Aorta (tissue), 5 donors: ENCODE measurements at regions of chr11 and their contacts with region 1.

Region 1: DNA sequence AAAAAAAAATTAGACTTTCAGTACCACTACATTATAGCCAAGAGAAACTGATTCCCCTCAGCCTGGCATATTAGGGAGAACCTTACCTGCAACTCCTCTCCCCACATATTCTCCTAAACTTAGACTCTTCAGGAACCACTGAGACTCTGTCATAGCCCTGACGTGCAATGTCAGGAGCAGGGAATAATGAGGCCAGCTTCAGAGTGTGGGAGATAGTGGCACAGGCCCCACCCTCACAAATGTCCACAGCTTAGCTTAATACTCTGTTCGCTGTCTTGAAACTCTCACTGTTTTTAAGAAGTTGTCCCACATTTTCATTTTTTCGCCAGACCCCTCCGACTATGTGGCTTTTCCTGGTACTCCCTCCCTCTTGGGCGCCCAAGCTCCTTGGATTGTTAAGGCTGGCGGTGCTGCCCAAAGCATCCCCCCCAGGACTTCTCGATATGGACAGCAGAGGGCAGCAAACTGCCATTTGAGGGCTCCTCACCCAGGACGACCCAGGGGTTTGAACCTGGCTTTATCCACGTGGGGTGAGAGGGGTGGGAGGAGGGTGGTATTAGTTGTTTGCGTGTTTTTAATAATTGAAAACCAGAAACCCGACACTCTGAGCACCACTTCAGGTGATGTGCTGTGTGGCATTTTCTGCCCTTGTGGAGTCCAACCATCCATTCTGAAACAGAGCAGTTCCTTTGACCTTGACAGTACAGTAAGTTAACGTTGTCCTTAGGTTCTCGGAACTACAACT is 45.2 kb upstream of the RASSF10 start:
- DNase-seq: peak; percentile 63 to 86
- ATAC-seq: peak; percentile 87
- H3K4me3 ChIP-seq: no peak overlapping the region
- H3K27ac ChIP-seq: no peak overlapping the region
- H3K4me1 ChIP-seq: no peaks in the 10 kb centered on the region
- H3K27me3 ChIP-seq: no peaks in the 10 kb centered on the region

Region 2: DNA sequence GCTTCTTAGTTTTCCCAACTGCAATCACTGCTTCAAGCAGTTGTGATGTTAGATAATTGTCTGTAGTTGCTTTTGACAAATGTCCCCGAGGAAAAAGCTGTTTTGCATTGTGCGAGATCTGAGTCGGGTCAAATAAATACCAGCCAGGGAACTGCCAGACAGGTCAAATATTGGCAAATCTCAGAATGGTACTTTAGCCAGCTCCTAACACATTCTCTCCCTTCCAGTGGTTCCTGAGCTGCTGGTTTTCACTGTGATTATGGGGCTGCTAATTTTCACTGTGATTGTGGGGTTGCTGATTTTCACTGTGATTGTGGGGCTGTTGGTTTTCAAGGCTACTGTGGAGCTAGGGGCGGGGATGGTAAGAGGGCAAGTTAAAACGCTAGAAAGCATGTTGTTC is 59.5 kb after region 1 on chr11:
- intact Hi-C with region 1: no loop called
- DNase-seq: no peak
- ATAC-seq: no peak
- H3K4me3 ChIP-seq: no peak overlapping the region
- H3K27ac ChIP-seq: no peak overlapping the region
- H3K4me1 ChIP-seq: no peaks in the 10 kb centered on the region
- H3K27me3 ChIP-seq: no peaks in the 10 kb centered on the region

Region 3: DNA sequence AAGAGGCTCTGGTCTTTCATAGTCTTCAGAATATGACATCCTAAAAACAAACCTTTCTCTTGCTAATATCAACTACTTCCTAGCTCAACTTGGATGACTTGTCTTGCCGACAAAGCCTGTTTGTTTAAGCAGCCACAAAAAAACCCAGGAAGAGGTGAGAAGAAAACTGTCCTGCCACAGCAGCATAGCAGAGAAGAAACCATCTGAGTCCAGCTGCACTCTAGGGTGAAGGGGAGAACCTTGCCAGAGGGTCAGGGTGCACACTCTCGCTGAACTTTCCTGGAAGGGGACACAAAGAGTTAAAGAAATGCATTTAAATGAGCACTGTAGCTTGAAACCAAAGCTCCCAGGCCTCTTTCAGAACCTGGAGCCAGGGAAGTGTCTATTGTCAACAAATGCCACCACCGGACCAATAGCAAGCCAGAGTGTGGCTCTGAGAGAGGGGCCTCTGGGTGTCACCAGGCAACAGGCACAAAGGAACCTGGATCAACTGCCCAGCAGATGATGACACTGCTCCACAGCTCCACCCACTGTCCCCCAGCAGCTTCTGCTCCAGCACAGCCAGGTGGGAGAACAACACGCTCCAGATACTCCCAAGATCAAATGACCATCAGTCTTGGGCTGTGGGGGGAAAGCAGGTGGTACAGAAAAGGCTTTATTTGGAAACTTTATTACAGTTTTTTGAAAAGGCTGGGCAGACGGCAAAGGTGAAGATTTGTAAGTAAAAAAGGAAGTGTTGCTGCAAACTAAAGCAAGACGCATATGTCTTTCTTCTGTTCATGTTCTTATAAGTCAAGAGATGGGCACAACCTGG is 150.8 kb after region 1 on chr11:
- intact Hi-C with region 1: no loop called
- DNase-seq: no peak
- ATAC-seq: no peak
- H3K4me3 ChIP-seq: no peak overlapping the region
- H3K27ac ChIP-seq: no peak overlapping the region
- H3K4me1 ChIP-seq: no peaks in the 10 kb centered on the region
- H3K27me3 ChIP-seq: peaks cover 0 to 3% of the 10 kb centered on the region in 2 donors

Region 4: DNA sequence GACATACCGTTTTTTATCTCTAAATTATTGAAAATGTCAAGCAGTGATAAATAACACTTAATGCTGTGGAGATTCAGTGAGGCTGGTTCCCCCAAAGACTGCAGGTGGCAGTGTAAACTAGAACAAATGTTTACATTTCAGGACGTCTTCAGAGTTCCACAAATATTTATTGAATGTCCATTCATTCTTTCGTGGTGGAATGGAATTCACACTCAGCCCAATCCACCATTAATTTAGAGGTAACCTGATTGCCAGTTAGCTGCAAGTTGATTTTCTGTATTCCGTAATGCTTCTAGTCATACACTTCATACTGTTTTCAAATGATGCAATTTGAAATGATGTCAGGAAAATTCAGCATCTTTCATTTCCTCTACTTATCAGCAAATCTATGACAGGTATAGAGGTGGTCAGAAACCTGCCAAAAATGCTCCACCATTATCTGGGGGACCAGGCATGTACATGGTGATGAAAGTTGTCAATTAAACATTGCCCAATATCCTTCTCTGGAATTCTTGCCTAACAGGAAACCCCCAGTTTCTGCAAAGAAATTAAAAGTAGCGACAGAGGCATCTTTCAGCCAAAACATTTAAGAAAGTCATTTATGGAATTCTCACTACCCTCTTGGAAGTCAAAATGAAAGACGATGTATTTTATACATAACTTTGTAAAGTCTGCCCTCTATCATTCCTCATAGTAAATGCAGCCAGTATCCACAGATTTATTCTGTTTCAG is 219.3 kb after region 1 on chr11:
- intact Hi-C with region 1: loop called in 1 of 2 experiments (anchors 10 kb)
- DNase-seq: no peak
- ATAC-seq: peak; percentile 64
- H3K4me3 ChIP-seq: peak overlapping the region in 1 of 2 donors; percentile 54
- H3K27ac ChIP-seq: no peak overlapping the region
- H3K4me1 ChIP-seq: no peaks in the 10 kb centered on the region
- H3K27me3 ChIP-seq: no peaks in the 10 kb centered on the region

Region 5: DNA sequence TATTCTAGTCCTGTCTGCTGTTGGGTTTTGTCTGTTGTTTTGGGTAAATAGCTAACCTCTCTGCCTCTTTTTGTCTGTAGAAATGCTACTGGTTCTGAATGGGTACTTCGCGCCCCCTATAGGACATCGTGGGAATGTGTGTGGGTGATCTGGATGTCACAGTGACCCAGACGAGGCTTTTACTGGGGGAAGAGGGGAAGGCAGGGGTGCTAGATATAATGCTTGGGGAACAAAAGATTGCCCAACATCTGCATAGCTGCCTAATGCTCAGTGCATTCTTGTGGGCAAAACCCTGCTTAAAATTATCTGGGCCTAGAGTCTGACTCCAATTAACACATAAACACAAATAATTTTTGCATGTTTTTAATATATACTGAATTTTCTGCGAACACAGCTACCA is 371.4 kb after region 1 on chr11:
- intact Hi-C with region 1: loop called (anchors 5 kb)
- DNase-seq: peak in 1 of 2 donors; percentile 64
- ATAC-seq: no peak
- H3K4me3 ChIP-seq: no peak overlapping the region
- H3K27ac ChIP-seq: no peak overlapping the region
- H3K4me1 ChIP-seq: peaks cover 0 to 2% of the 10 kb centered on the region in 2 donors
- H3K27me3 ChIP-seq: no peaks in the 10 kb centered on the region

Region 6: GRCh38 chr11:13343931-13344717 is 380.2 kb after region 1 on chr11:
- intact Hi-C with region 1: loop called (anchors 5 kb)
- DNase-seq: peak in 1 of 2 donors; percentile 79
- ATAC-seq: peak; percentile 73
- H3K4me3 ChIP-seq: no peak overlapping the region
- H3K27ac ChIP-seq: no peak overlapping the region
- H3K4me1 ChIP-seq: no peaks in the 10 kb centered on the region
- H3K27me3 ChIP-seq: no peaks in the 10 kb centered on the region